ENCODE measurements at regions of chr9 and their contacts with region 1.

Region 1: DNA sequence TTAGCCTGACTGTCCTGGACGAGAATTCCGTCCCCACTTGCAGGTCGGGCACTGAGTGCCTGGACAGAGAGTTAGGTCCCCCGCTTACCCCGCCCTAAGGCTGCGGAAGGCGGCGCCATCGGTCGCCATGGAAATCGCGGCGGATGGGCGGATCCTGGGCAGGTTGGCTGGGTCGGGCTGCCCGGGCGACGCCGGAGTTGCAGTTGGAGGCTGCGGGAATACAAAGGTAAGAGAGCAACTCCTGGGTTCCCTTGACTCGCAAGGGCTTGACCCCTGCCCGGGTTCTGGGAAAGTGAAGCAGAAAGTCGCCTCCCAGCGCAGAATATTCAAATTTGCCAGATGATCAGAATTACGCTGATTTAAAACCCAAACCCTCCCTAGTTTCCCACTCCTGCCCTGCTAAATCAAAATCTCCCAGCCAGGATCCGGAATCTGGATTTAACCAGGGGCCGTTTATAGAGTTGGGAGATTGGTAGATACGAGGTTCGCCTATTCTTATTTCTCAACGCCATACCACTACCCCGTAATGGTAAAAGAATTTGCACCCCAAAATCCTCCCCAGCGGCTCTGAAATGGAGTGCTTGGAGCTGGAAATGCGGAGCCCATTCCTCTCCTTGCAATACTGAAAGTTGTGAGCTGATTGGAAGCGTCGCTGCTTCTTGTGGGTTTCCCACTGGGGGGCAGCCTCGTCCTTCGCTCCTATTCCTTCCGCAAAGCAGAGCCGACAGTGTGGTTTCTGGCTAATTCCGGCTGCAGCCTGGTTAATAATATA is 156.4 kb upstream of the RASEF start:
- DNase-seq: peak; percentile 87
- ATAC-seq: peak; percentile 94
- H3K4me3 Mint-ChIP-seq: peak overlapping the region; percentile 91
- H3K27ac Mint-ChIP-seq: peak overlapping the region; percentile 48; the same call in 1 of the 2 replicates
- H3K4me1 Mint-ChIP-seq: peaks cover 12% of the 10 kb centered on the region
- H3K27me3 Mint-ChIP-seq: no peaks in the 10 kb centered on the region; the same call in none of the 2 replicates
- CTCF ChIP-seq: peak; percentile 46

Region 2: GRCh38 chr9:83130541-83130940 is 88.8 kb before region 1 on chr9:
- CTCF ChIA-PET with region 1: no interaction called
- POLR2A ChIA-PET with region 1: no interaction called
- DNase-seq: no peak
- ATAC-seq: no peak
- H3K4me3 Mint-ChIP-seq: no peak overlapping the region
- H3K27ac Mint-ChIP-seq: no peak overlapping the region
- H3K4me1 Mint-ChIP-seq: no peaks in the 10 kb centered on the region
- H3K27me3 Mint-ChIP-seq: no peaks in the 10 kb centered on the region
- CTCF ChIP-seq: no peak

Region 3: GRCh38 chr9:83234541-83234940 is 15.2 kb after region 1 on chr9:
- CTCF ChIA-PET with region 1: interaction called, 16 read pairs
- POLR2A ChIA-PET with region 1: no interaction called
- DNase-seq: no peak
- ATAC-seq: no peak
- H3K4me3 Mint-ChIP-seq: no peak overlapping the region
- H3K27ac Mint-ChIP-seq: no peak overlapping the region
- H3K4me1 Mint-ChIP-seq: peaks cover 20% of the 10 kb centered on the region
- H3K27me3 Mint-ChIP-seq: no peaks in the 10 kb centered on the region
- CTCF ChIP-seq: no peak

Region 4: DNA sequence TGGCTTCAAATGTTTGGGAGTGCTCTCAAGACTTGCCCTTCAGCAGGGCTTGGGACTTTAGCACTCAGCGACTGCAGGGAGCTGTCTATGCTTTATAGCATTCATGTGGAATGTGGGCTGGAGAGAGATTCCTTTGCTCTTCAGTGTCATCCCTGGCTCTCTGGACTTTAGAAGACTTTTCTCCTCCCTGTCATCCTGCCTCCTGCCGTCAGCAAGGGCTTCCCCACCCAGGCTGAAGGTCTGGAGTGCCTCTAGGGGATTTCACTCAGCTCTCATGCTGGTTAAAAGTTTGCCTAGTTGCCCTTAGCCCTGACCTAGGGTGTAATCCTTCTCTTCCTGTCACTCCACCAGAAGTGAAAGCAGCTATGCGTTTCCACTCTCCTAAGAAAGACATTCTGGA is 108.0 kb after region 1 on chr9:
- CTCF ChIA-PET with region 1: interaction called, 51 read pairs
- POLR2A ChIA-PET with region 1: no interaction called
- DNase-seq: no peak
- ATAC-seq: peak; percentile 71; the same call in 1 of the 2 replicates
- H3K4me3 Mint-ChIP-seq: no peak overlapping the region
- H3K27ac Mint-ChIP-seq: no peak overlapping the region
- H3K4me1 Mint-ChIP-seq: peaks cover 7% of the 10 kb centered on the region
- H3K27me3 Mint-ChIP-seq: no peaks in the 10 kb centered on the region; the same call in 1 of the 2 replicates
- CTCF ChIP-seq: no peak

Region 5: DNA sequence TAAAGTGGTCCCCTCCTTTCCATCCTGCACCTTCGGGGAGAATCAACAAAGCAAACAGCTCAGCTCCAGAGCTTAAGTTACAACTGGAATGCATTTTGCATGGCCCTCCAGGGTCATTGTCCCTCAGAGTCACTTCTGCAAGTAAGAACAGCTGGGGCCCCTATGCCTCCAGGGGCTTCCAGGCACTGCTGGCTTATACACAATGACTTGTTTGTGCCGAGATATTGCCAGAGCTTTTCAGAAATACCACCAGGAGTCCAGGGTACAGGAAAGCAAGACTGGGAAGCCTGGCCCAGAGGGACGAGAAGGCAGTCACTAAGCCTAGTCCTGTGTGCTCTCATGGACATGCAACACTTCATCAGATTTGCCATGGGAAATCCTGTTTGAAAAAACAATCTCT is 307.6 kb after region 1 on chr9:
- CTCF ChIA-PET with region 1: interaction called, 11 read pairs
- POLR2A ChIA-PET with region 1: no interaction called
- DNase-seq: no peak
- ATAC-seq: peak; percentile 82
- H3K4me3 Mint-ChIP-seq: peak overlapping the region; percentile 15; the same call in 1 of the 2 replicates
- H3K27ac Mint-ChIP-seq: no peak overlapping the region
- H3K4me1 Mint-ChIP-seq: peaks cover 25% of the 10 kb centered on the region
- H3K27me3 Mint-ChIP-seq: no peaks in the 10 kb centered on the region
- CTCF ChIP-seq: no peak

Region 6: DNA sequence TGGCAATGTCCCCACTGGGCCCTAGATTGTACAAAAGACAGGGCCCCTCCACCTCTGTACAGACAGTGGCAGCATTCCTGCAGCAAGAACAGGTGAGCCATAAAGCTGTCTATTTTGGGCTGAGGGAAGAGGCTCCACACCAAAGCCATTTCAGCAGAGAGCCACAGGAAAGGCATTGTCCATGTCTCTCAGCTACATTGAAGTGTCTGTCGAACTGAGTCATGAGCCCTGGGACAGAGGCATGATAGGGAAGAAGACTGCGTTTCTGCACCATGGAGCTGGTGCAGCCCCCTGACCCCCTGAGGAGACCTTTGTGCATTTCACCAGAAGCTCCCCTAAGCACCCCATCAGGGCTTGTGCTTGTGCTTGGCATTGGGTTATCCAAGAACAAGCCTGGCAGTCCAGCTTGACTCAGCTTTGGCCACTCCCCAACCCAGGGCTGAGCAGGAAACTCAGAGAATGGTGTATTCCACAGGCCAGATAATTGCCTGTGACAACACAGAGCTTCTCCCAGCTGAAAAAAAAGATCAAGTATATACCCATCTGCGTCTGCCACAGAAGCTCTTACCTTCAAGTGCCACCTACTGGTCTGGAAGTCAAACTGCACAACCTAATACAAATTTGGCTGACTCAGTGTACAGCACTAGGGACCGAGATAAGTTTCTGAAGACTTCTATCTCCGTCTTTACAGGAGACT is 324.8 kb after region 1 on chr9:
- CTCF ChIA-PET with region 1: interaction called, 61 read pairs
- POLR2A ChIA-PET with region 1: no interaction called
- DNase-seq: no peak
- ATAC-seq: peak; percentile 96
- H3K4me3 Mint-ChIP-seq: no peak overlapping the region
- H3K27ac Mint-ChIP-seq: no peak overlapping the region
- H3K4me1 Mint-ChIP-seq: 0 out of 2 replicates have a peak, but pooled peaks cover under 1% of the 10 kb centered on the region
- H3K27me3 Mint-ChIP-seq: peaks cover 25% of the 10 kb centered on the region
- CTCF ChIP-seq: peak; percentile 70

Region 7: GRCh38 chr9:83622939-83623678 is 403.8 kb after region 1 on chr9 and contains the start of gene IDNK:
- CTCF ChIA-PET with region 1: interaction called, 14 read pairs
- POLR2A ChIA-PET with region 1: no interaction called
- DNase-seq: peak; percentile 69
- ATAC-seq: peak; percentile 83
- H3K4me3 Mint-ChIP-seq: peak within 1 kb of the TSS; percentile 80
- H3K27ac Mint-ChIP-seq: no peak within 1 kb of the TSS
- H3K4me1 Mint-ChIP-seq: peaks cover 17% of the 10 kb centered on the region
- H3K27me3 Mint-ChIP-seq: peaks cover 8% of the 10 kb centered on the region
- CTCF ChIP-seq: no peak
- total RNA-seq, gene IDNK: 0.50 to 0.78 TPM (median 0.69 TPM) in 3 replicates

Measured in WTC11 (cell line).